ENCODE measurements at regions of chr5 and their contacts with region 1.

Region 1: DNA sequence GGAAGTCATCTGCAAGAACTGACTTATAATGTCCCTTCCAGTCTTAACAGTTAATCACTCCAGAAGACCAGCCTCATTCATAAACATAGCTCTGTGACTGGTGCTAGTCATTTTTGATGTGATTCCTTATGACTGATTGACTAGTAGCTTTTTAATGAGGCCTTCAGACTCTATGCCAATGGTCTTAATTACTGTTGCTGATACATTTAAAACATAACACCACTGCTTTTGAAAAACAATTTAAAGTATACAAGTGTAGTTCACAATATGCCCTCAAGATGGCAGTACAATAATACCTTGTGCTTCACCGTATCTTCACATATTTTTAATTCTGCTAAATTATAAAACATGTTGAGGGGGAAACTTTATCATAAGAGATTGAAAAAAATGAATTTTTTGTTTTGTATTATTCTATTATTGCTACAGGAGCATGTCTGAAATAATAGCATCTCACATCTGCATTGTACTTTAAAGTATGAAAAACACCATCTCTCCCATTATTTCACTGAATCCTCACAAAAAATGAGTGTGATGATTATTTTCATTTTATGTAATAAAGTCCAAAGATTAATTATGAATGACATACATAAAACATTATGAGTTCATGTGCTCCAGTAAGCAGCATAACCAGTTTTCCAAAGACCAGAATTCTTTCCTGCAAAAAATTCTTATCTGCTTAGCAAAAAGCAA is 55.2 kb upstream of the SHISAL2B start:
- DNase-seq: no peak
- H3K4me3 ChIP-seq: no peak overlapping the region
- CTCF ChIP-seq: peak; percentile 54

Region 2: DNA sequence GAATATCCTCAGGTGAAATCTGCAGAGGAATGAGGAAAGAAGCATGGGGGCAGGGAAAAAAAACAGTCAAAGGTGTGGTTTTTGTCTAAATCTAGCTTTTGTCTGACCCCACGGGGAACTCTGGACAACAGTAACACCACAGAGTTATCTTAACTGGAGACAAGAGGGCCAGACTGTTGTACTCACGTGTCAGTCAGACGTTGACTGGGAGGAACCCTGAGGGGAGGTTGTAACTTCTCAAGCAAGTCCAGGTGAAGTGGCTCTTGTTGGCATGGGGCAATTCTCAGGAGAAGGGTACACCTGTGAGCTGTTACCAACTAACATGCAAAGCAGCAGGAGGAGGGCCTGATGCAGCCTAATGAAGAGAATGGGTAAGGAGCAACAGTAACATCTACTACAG is 11.0 kb after region 1 on chr5:
- CTCF ChIA-PET with region 1: interaction called, 47 read pairs
- POLR2A ChIA-PET with region 1: no interaction called
- DNase-seq: no peak
- H3K4me3 ChIP-seq: no peak overlapping the region
- CTCF ChIP-seq: no peak

Region 3: GRCh38 chr5:64768358-64769312 is 133.5 kb after region 1 on chr5 and contains the starts of genes CWC27 and SREK1IP1:
- CTCF ChIA-PET with region 1: interaction called, 27 read pairs
- POLR2A ChIA-PET with region 1: no interaction called
- DNase-seq: peak; percentile 51
- H3K4me3 ChIP-seq: peak within 1 kb of the TSS; percentile 92
- CTCF ChIP-seq: peak; percentile 11

Region 4: DNA sequence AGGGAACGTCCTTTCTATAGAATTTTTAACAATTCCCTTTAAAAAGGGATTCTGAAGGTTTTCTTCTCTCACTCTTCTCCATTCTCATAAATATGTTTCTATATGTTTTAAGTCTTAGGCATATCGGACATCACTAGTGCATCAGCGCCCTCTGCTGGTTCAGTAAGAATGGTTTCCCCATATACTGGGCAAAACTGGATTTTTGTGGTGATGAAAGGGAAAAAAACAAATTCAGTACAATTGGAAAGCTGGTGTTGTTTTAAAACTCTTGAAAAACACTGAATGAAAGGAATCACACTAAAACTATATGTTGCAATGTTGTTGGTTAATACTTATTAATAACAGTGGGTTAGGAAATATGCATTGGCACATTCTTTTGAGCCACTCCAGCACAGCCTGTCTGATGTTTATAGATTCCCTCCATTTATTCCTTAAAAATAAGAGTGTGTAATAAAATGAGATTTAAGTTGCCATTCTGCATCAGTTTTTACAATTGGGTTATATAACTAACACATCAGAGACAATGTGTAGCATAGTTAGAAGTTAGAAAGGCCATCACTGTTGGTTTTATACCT is 149.4 kb after region 1 on chr5:
- CTCF ChIA-PET with region 1: interaction called, 280 read pairs
- POLR2A ChIA-PET with region 1: no interaction called
- DNase-seq: peak; percentile 49
- H3K4me3 ChIP-seq: no peak overlapping the region
- CTCF ChIP-seq: peak; percentile 65